ENCODE measurements at regions of chr12 and their contacts with region 1.

Region 1: GRCh38 chr12:113221181-113221997 is at the start of gene TPCN1:
- DNase-seq: peak; percentile 96 to 100 (median 98)
- ATAC-seq: peak; percentile 94
- H3K4me3 ChIP-seq: peak within 1 kb of the TSS; percentile 66 to 85
- H3K4me3 Mint-ChIP-seq: peak within 1 kb of the TSS; percentile 86
- H3K27ac ChIP-seq: peak within 1 kb of the TSS; percentile 62 to 63
- H3K27ac Mint-ChIP-seq: peak within 1 kb of the TSS; percentile 83
- H3K4me1 ChIP-seq: peaks cover 27% of the 10 kb centered on the region
- H3K4me1 Mint-ChIP-seq: peaks cover 45% of the 10 kb centered on the region
- H3K27me3 ChIP-seq: no peaks in the 10 kb centered on the region
- H3K27me3 Mint-ChIP-seq: no peaks in the 10 kb centered on the region
- CTCF ChIP-seq: no peak
- total RNA-seq, gene TPCN1: 32.8 to 37.0 TPM

Region 2: GRCh38 chr12:111268738-111269572 is 1952.4 kb before region 1 on chr12:
- CTCF ChIA-PET with region 1: no interaction called
- POLR2A ChIA-PET with region 1: no interaction called
- intact Hi-C with region 1: no loop called
- DNase-seq: peak in 4 of 9 experiments; percentile 1 to 23 (median 14)
- ATAC-seq: no peak
- H3K4me3 ChIP-seq: no peak overlapping the region
- H3K4me3 Mint-ChIP-seq: no peak overlapping the region
- H3K27ac ChIP-seq: no peak overlapping the region
- H3K27ac Mint-ChIP-seq: no peak overlapping the region
- H3K4me1 ChIP-seq: no peaks in the 10 kb centered on the region
- H3K4me1 Mint-ChIP-seq: peaks cover 2% of the 10 kb centered on the region
- H3K27me3 ChIP-seq: no peaks in the 10 kb centered on the region
- H3K27me3 Mint-ChIP-seq: peaks cover 7% of the 10 kb centered on the region
- CTCF ChIP-seq: peak; percentile 44

Region 3: GRCh38 chr12:112798006-112798760 is 423.2 kb before region 1 on chr12:
- CTCF ChIA-PET with region 1: no interaction called
- POLR2A ChIA-PET with region 1: no interaction called
- intact Hi-C with region 1: no loop called
- DNase-seq: no peak
- ATAC-seq: no peak
- H3K4me3 ChIP-seq: no peak overlapping the region
- H3K4me3 Mint-ChIP-seq: no peak overlapping the region
- H3K27ac ChIP-seq: no peak overlapping the region
- H3K27ac Mint-ChIP-seq: no peak overlapping the region
- H3K4me1 ChIP-seq: no peaks in the 10 kb centered on the region
- H3K4me1 Mint-ChIP-seq: peaks cover 11% of the 10 kb centered on the region
- H3K27me3 ChIP-seq: peaks cover 0 to 4% of the 10 kb centered on the region in 2 experiments
- H3K27me3 Mint-ChIP-seq: peaks cover 53% of the 10 kb centered on the region
- CTCF ChIP-seq: no peak

Region 4: GRCh38 chr12:113208041-113208934 is 13.1 kb before region 1 on chr12:
- CTCF ChIA-PET with region 1: interaction called, 3 read pairs
- POLR2A ChIA-PET with region 1: interaction called, 22 read pairs
- intact Hi-C with region 1: loop called (anchors 1 kb)
- DNase-seq: peak in 8 of 9 experiments; percentile 31 to 94 (median 59)
- ATAC-seq: peak; percentile 77
- H3K4me3 ChIP-seq: no peak overlapping the region
- H3K4me3 Mint-ChIP-seq: peak overlapping the region; percentile 55
- H3K27ac ChIP-seq: peak overlapping the region; percentile 38 to 74
- H3K27ac Mint-ChIP-seq: peak overlapping the region; percentile 90
- H3K4me1 ChIP-seq: peaks cover 44% of the 10 kb centered on the region
- H3K4me1 Mint-ChIP-seq: peaks cover 44% of the 10 kb centered on the region
- H3K27me3 ChIP-seq: no peaks in the 10 kb centered on the region
- H3K27me3 Mint-ChIP-seq: no peaks in the 10 kb centered on the region
- CTCF ChIP-seq: no peak

Region 5: DNA sequence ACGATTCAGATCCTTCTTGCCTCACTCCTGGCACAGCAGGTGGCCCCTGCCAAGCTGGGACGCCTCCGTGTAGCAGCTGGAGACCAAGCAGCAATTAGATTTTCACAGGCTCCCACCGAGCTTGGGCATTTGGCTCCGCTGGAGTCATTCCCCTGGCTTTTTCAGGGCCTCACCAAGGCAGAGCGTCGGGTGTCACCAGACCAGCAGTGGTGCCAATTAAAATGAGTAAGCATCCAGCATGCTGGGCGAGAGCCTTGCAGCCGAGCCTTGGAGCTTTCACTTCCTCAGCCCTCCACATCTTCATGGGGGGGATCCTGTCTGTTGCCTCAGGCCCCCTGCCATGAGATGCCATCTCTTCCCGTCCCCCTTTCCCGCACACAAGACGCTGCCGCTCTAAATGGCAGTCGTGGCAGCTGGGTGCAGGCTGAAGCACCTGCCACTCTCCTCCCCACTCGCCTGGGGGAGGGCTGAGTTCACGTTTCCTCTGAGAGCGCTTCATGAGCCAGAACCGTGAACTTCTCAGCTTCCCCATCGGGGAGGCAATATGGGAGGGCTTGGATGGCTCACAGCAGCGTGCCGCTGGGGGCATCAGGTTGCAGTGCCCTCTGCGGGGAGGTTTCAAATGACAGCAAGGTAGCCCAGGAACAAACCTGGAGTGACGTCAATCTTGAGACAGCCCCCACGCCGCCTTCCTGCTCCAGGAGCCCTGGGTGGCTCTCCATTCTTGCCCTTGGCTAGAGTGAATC is 11.6 kb after region 1 on chr12:
- CTCF ChIA-PET with region 1: interaction called, 5 read pairs
- POLR2A ChIA-PET with region 1: interaction called, 12 read pairs
- intact Hi-C with region 1: loop called (anchors 1 kb)
- DNase-seq: peak; percentile 46 to 89 (median 74)
- ATAC-seq: peak; percentile 97
- H3K4me3 ChIP-seq: peak overlapping the region; percentile 31 to 34
- H3K4me3 Mint-ChIP-seq: peak overlapping the region; percentile 86
- H3K27ac ChIP-seq: peak overlapping the region; percentile 16 to 46
- H3K27ac Mint-ChIP-seq: peak overlapping the region; percentile 90
- H3K4me1 ChIP-seq: peaks cover 41% of the 10 kb centered on the region
- H3K4me1 Mint-ChIP-seq: peaks cover 42% of the 10 kb centered on the region
- H3K27me3 ChIP-seq: no peaks in the 10 kb centered on the region
- H3K27me3 Mint-ChIP-seq: no peaks in the 10 kb centered on the region
- CTCF ChIP-seq: peak; percentile 55

Region 6: GRCh38 chr12:113334786-113335540 is 113.6 kb after region 1 on chr12 and contains the start of gene SLC8B1:
- CTCF ChIA-PET with region 1: no interaction called
- POLR2A ChIA-PET with region 1: no interaction called
- intact Hi-C with region 1: loop called (anchors 1 to 2 kb)
- DNase-seq: peak; percentile 74 to 95 (median 86)
- ATAC-seq: peak; percentile 99
- H3K4me3 ChIP-seq: peak within 1 kb of the TSS; percentile 80 to 89
- H3K4me3 Mint-ChIP-seq: peak within 1 kb of the TSS; percentile 92
- H3K27ac ChIP-seq: peak within 1 kb of the TSS; percentile 31 to 51
- H3K27ac Mint-ChIP-seq: peak within 1 kb of the TSS; percentile 88
- H3K4me1 ChIP-seq: peaks cover 17% of the 10 kb centered on the region
- H3K4me1 Mint-ChIP-seq: peaks cover 41% of the 10 kb centered on the region
- H3K27me3 ChIP-seq: no peaks in the 10 kb centered on the region
- H3K27me3 Mint-ChIP-seq: no peaks in the 10 kb centered on the region
- CTCF ChIP-seq: no peak
- total RNA-seq, gene SLC8B1: 67.3 to 72.8 TPM

Region 7: DNA sequence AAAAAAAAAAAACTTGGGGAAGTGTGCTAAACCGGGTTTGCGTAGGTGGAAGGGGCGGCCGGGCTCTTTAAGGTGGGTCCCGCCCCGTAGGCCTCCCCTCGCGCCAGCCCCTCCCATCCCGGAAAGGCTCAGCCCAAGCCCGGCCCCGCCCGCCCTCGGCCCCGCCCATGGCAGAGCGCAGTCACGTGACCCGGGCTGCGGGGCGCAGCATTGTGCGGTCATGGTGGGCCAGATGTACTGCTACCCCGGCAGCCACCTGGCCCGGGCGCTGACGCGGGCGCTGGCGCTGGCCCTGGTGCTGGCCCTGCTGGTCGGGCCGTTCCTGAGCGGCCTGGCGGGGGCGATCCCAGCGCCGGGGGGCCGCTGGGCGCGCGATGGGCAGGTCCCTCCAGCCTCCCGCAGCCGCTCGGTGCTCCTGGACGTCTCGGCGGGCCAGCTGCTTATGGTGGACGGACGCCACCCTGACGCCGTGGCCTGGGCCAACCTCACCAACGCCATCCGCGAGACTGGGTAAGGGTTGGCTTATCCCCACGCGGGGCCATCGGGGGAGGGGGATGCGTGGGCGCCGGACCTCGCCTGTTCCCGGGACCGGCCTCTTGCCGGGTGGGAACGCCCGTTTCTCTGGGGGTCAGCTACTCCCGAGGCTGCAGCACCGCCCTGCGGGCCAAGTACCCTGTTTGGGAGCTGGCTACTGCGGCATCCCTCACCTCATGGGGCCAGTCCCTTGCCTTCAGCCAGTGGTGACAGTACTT is 137.2 kb after region 1 on chr12 and contains the start of gene PLBD2:
- CTCF ChIA-PET with region 1: no interaction called
- POLR2A ChIA-PET with region 1: no interaction called
- intact Hi-C with region 1: loop called (anchors 1 kb)
- DNase-seq: peak; percentile 92 to 97 (median 94)
- ATAC-seq: peak; percentile 97
- H3K4me3 ChIP-seq: peak within 1 kb of the TSS; percentile 72 to 79
- H3K4me3 Mint-ChIP-seq: peak within 1 kb of the TSS; percentile 91
- H3K27ac ChIP-seq: peak within 1 kb of the TSS; percentile 81 to 84
- H3K27ac Mint-ChIP-seq: peak within 1 kb of the TSS; percentile 96
- H3K4me1 ChIP-seq: peaks cover 14% of the 10 kb centered on the region
- H3K4me1 Mint-ChIP-seq: peaks cover 16% of the 10 kb centered on the region
- H3K27me3 ChIP-seq: peaks cover 0 to 2% of the 10 kb centered on the region in 2 experiments
- H3K27me3 Mint-ChIP-seq: no peaks in the 10 kb centered on the region
- CTCF ChIP-seq: no peak
- total RNA-seq, gene PLBD2: 9.2 to 9.9 TPM